Sciatic nerve (tissue), 2 donors: ENCODE measurements at regions of chr4 and their contacts with region 1.

Region 1: DNA sequence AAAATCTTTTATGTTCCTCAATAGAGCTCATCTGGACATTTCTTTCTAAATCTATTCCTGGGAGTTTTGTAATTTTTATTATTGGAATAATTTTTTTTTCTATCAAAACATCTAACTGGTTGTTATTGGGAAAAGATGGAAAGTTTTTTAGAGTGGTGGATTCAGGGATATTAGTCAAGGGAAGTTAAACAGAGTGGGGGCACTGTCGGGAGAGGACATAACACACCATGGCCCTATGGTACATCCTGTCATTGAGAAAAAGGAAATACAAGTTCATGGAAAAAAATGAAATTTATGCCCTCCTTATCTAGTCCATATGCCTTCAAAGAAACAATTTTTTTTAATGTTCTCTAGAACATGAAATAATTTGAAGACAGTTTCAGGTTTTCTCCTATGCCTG is 96.3 kb upstream of the TSPAN5 start:
- DNase-seq: no peak
- ATAC-seq: no peak

Region 2: DNA sequence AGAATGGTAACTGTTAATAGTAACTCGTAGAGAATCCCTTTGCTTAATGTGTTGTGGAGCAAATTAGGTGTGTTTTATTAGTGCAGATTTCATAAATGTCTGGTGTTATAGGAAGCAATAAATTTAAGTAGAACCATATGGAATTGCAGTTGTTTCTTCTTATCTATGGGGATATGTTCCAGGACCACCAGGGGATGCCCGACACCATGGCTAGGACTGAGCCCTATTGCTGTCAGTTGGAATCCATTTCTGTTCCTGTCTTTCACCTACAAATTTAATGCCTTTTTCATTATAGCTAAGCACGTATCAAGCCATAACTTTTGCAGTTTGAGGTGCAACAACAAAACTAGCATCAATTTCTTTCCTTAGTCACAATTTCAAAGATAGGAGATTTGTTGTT is 1363.0 kb after region 1 on chr4:
- intact Hi-C with region 1: loop called (anchors 10 kb)
- DNase-seq: no peak
- ATAC-seq: no peak